HCT116 (cell line): ENCODE measurements at regions of chr6 and their contacts with region 1.

Region 1: DNA sequence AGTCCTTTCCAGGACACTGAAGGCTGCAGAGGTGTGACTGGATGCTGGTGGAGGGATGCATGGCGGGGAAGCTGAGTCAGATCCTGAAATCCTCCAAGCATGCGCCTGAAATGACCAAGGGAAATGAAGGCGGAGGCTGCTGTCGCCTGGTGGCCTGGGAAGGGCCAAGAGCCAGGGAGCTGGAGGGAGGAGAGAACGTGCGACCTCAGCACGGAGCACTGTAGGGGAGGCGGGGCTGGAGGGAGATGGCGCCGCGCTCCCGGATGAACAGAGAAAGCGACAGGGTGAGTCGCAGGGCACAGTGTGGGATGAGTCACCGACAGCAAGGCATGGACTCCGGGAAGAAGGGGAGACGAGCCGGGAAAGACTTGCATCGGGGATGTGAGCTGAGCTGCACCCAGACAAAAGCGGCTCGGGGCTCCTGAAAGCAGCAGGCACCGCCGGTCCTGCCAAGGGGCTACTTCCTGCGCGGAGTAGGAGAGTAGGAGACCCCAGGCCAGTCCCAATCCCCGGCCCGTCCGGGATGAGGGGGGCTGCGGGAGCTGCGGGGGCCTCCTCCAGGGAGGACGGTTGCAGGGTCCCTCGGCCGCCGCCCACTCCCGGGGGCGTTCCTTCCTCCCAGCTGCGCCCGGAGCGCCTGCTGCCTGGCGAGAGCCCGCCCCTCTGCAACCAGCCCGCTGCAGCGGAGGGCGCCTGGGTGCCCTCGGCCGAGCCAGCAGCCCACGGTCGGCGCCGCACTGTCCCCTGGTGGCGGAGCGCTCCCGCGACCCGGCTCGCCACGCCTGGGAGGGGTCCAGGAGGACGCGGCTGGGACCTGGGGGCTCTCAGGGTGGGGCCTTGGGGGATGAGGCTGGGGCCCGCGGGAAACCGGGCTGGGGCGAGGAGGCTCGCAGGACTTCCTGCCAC is 11.0 kb upstream of the NQO2 start:
- DNase-seq: peak; percentile 95
- ATAC-seq: peak; percentile 82
- H3K4me3 ChIP-seq: peak overlapping the region; percentile 57 to 62
- H3K27ac ChIP-seq: peak overlapping the region; percentile 92
- H3K4me1 ChIP-seq: peaks cover 34 to 54% of the 10 kb centered on the region in 2 experiments
- H3K27me3 ChIP-seq: no peaks in the 10 kb centered on the region
- CTCF ChIP-seq: peak in 2 of 3 experiments; percentile 64 to 81; a peak in 4 of 6 replicates
- POLR2A ChIP-seq: peak; percentile 62
- RAD21 ChIP-seq: no peak

Region 2: GRCh38 chr6:2111162-2111677 is 877.5 kb before region 1 on chr6:
- CTCF ChIA-PET with region 1: no interaction called
- POLR2A ChIA-PET with region 1: no interaction called
- RAD21 ChIA-PET with region 1: no interaction called
- intact Hi-C with region 1: no loop called
- DNase-seq: peak; percentile 21
- ATAC-seq: no peak
- H3K4me3 ChIP-seq: no peak overlapping the region
- H3K27ac ChIP-seq: no peak overlapping the region
- H3K4me1 ChIP-seq: peaks cover 8 to 17% of the 10 kb centered on the region in 2 experiments; a peak in 3 of 4 replicates
- H3K27me3 ChIP-seq: no peaks in the 10 kb centered on the region
- CTCF ChIP-seq: no peak
- POLR2A ChIP-seq: no peak
- RAD21 ChIP-seq: no peak

Region 3: DNA sequence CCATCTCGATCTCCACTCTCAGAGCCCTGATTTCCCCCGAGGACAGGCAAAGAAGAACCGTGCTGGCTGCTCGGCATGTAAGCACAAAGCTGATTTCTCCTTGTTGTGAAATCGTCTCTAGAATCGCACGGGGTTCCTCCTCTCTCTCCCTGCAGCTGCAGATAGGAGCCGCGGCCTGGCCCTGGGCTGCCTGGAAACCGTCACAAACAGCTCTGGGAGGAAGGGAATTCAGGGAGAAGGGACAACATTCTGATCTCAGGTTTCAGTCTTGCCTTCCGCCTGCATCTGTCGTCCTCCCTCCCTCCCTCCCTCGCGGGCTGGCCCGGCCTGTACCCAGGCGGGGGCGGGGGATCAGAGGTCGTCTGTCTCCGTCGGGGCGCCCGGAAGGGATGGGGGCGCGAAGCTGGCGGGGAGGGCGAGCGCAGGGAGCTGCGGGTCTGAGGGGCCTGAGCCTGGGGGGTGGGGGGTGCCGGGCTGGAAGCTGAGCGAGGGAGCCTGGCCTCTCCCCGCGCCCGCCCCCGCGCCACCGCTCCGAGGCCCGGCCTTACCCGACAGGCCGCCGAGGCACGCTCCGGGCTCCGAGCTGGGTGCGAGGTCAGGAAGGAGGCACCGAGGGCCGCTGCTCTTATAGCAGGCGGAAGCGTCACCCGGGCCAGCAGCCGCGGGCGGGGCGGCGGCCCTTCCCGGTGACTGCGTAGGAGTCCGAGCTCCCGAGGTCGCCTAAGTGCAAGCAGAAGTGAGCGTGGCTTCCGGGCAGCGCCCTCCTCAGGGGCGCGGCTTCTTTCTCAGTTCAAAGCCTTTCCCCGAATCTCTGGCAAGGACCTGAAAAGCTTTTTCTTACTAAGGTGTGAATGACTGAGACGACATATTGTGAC is 147.2 kb before region 1 on chr6 and contains the start of gene SERPINB1:
- CTCF ChIA-PET with region 1: interaction called, 22 read pairs
- POLR2A ChIA-PET with region 1: interaction called, 22 read pairs
- RAD21 ChIA-PET with region 1: interaction called in 1 of 2 experiments, 9 read pairs
- intact Hi-C with region 1: loop called (anchors 1 kb)
- DNase-seq: peak; percentile 81
- ATAC-seq: peak; percentile 78
- H3K4me3 ChIP-seq: peak within 1 kb of the TSS; percentile 70 to 71
- H3K27ac ChIP-seq: peak within 1 kb of the TSS; percentile 64
- H3K4me1 ChIP-seq: peaks cover 54 to 77% of the 10 kb centered on the region in 2 experiments
- H3K27me3 ChIP-seq: no peaks in the 10 kb centered on the region
- CTCF ChIP-seq: no peak
- POLR2A ChIP-seq: peak; percentile 42
- RAD21 ChIP-seq: no peak
- total RNA-seq, gene SERPINB1: 73.2 TPM

Region 4: GRCh38 chr6:2848851-2849250 is 139.8 kb before region 1 on chr6:
- CTCF ChIA-PET with region 1: interaction called, 22 read pairs
- POLR2A ChIA-PET with region 1: interaction called, 11 read pairs
- RAD21 ChIA-PET with region 1: interaction called in 1 of 2 experiments, 9 read pairs
- intact Hi-C with region 1: loop called (anchors 1 kb)
- DNase-seq: no peak
- ATAC-seq: peak; percentile 43
- H3K4me3 ChIP-seq: no peak overlapping the region
- H3K27ac ChIP-seq: no peak overlapping the region; the same call in 1 of the 2 replicates
- H3K4me1 ChIP-seq: peaks cover 26 to 76% of the 10 kb centered on the region in 2 experiments
- H3K27me3 ChIP-seq: no peaks in the 10 kb centered on the region
- CTCF ChIP-seq: no peak
- POLR2A ChIP-seq: no peak
- RAD21 ChIP-seq: no peak

Region 5: DNA sequence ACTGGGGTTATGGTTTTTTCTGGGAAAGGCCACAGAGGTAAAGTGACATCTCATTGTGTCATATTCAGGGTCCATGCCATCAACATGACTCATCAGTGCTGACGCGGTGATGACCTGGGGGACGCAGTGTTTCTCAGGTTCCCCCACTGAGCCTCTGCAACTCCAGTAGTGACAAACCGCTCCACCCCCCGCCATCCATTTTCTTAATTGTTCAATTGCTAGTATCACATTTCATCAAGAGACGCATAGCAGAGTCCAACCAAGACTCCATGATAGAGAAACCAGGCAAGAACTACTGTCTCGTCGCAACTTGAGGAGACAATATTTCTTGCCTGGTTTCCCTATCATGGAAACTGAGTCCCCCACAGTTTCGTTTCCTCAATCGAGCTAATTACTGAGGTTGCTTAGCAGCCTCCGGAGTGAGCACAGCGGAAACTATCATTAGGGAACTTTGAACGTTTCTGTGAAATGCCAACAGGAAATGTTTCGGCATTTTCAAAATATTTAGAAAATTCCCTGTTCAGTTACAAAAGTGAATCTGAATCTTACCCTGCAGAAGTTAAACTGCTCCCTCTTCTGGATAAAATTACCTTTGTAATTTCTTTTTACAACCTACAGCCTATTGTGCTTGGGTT is 134.8 kb before region 1 on chr6:
- CTCF ChIA-PET with region 1: interaction called, 4 read pairs
- POLR2A ChIA-PET with region 1: interaction called, 10 read pairs
- RAD21 ChIA-PET with region 1: no interaction called
- intact Hi-C with region 1: no loop called
- DNase-seq: peak; percentile 87
- ATAC-seq: peak; percentile 47
- H3K4me3 ChIP-seq: peak overlapping the region; percentile 23 to 53
- H3K27ac ChIP-seq: peak overlapping the region; percentile 76
- H3K4me1 ChIP-seq: peaks cover 44 to 88% of the 10 kb centered on the region in 2 experiments
- H3K27me3 ChIP-seq: no peaks in the 10 kb centered on the region
- CTCF ChIP-seq: peak in 2 of 3 experiments; percentile 26 to 40; a peak in 2 of 6 replicates
- POLR2A ChIP-seq: no peak
- RAD21 ChIP-seq: no peak

Region 6: GRCh38 chr6:2952557-2953095 is 36.1 kb before region 1 on chr6:
- CTCF ChIA-PET with region 1: interaction called, 58 read pairs
- POLR2A ChIA-PET with region 1: interaction called, 14 read pairs
- RAD21 ChIA-PET with region 1: interaction called in 1 of 2 experiments, 14 read pairs
- intact Hi-C with region 1: loop called (anchors 1 kb)
- DNase-seq: peak; percentile 91
- ATAC-seq: peak; percentile 96
- H3K4me3 ChIP-seq: no peak overlapping the region
- H3K27ac ChIP-seq: peak overlapping the region; percentile 12; the same call in 1 of the 2 replicates
- H3K4me1 ChIP-seq: peaks cover 10 to 18% of the 10 kb centered on the region in 2 experiments
- H3K27me3 ChIP-seq: no peaks in the 10 kb centered on the region
- CTCF ChIP-seq: peak; percentile 99 to 100 (median 99)
- POLR2A ChIP-seq: no peak
- RAD21 ChIP-seq: peak; percentile 83

Region 7: DNA sequence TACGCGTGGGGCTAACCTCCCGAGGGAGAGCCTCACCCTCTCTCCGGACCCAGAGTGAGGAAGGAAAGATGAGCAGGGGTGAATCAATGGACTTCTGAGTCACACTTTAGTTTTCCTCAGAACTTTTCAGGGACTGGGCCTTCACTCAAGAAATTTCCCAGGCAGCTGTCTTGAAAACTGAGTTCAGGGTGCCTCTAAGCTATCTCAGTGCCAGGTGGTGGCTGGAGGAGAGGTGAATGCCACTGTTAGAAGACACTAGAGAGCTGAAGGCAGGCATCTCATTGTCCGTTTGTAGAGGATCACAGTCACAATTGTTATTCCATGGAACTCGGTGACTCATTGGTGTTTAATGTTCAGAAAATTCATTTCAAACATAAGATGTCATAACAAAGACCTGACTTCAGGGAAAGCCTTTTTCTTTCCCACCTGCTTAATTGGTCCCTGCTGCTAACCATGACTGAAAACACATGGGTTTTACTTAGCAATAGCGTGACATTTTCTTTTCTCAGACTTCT is 12.1 kb before region 1 on chr6:
- CTCF ChIA-PET with region 1: interaction called, 5 read pairs
- POLR2A ChIA-PET with region 1: interaction called, 10 read pairs
- RAD21 ChIA-PET with region 1: no interaction called
- intact Hi-C with region 1: no loop called
- DNase-seq: no peak
- ATAC-seq: peak; percentile 48
- H3K4me3 ChIP-seq: peak overlapping the region in 1 of 2 experiments; percentile 22; a peak in 2 of 4 replicates
- H3K27ac ChIP-seq: peak overlapping the region; percentile 37; the same call in 1 of the 2 replicates
- H3K4me1 ChIP-seq: peaks cover 33 to 67% of the 10 kb centered on the region in 2 experiments
- H3K27me3 ChIP-seq: no peaks in the 10 kb centered on the region
- CTCF ChIP-seq: no peak
- POLR2A ChIP-seq: no peak
- RAD21 ChIP-seq: no peak

Region 8: GRCh38 chr6:3312604-3313231 is 324.0 kb after region 1 on chr6:
- CTCF ChIA-PET with region 1: no interaction called
- POLR2A ChIA-PET with region 1: no interaction called
- RAD21 ChIA-PET with region 1: no interaction called
- intact Hi-C with region 1: no loop called
- DNase-seq: no peak
- ATAC-seq: no peak
- H3K4me3 ChIP-seq: no peak overlapping the region
- H3K27ac ChIP-seq: no peak overlapping the region
- H3K4me1 ChIP-seq: no peaks in the 10 kb centered on the region
- H3K27me3 ChIP-seq: no peaks in the 10 kb centered on the region
- CTCF ChIP-seq: no peak
- POLR2A ChIP-seq: no peak
- RAD21 ChIP-seq: no peak

Region 9: DNA sequence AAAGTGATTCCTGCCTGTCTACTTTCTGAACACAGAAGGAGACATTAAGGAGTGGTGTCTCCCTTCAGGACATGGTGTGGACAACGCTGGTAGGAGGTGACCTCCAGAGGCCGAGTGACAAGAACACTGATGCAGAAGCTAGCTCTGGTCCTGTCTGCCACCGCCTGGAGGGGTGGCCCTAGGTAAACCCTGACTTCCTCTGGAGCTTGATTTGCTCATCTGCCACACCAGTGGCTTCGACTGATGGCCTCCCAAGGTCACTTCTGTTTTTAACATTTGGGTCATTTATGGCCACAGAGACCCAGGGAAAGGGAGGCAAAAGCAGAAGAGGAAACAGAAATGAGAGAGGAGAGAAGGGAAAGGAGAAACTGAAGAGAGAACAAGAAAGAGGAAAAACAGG is 517.5 kb after region 1 on chr6:
- CTCF ChIA-PET with region 1: no interaction called
- POLR2A ChIA-PET with region 1: no interaction called
- RAD21 ChIA-PET with region 1: no interaction called
- intact Hi-C with region 1: no loop called
- DNase-seq: no peak
- ATAC-seq: no peak
- H3K4me3 ChIP-seq: no peak overlapping the region
- H3K27ac ChIP-seq: no peak overlapping the region
- H3K4me1 ChIP-seq: peaks cover 3 to 7% of the 10 kb centered on the region in 2 experiments; a peak in 3 of 4 replicates
- H3K27me3 ChIP-seq: no peaks in the 10 kb centered on the region
- CTCF ChIP-seq: no peak
- POLR2A ChIP-seq: no peak
- RAD21 ChIP-seq: no peak